Endothelial cell of umbilical vein (primary cell): ENCODE measurements at regions of chr11 and their contacts with region 1.

Region 1: GRCh38 chr11:64566042-64566914 is 24.7 kb upstream of the SLC22A12 start:
- DNase-seq: peak; percentile 65
- H3K4me3 ChIP-seq: no peak overlapping the region
- H3K27ac ChIP-seq: no peak overlapping the region
- H3K4me1 ChIP-seq: no peaks in the 10 kb centered on the region
- H3K27me3 ChIP-seq: no peaks in the 10 kb centered on the region
- CTCF ChIP-seq: no peak
- POLR2A ChIP-seq: no peak

Region 2: GRCh38 chr11:64638018-64638665 is 71.9 kb after region 1 on chr11:
- CTCF ChIA-PET with region 1: no interaction called
- POLR2A ChIA-PET with region 1: no interaction called
- dilution Hi-C with region 1: no loop called
- intact Hi-C with region 1: loop called (anchors 5 kb)
- DNase-seq: no peak
- H3K4me3 ChIP-seq: no peak overlapping the region
- H3K27ac ChIP-seq: no peak overlapping the region
- H3K4me1 ChIP-seq: no peaks in the 10 kb centered on the region
- H3K27me3 ChIP-seq: peaks cover 37 to 48% of the 10 kb centered on the region in 2 experiments
- CTCF ChIP-seq: no peak
- POLR2A ChIP-seq: no peak

Region 3: GRCh38 chr11:64659417-64660144 is 93.3 kb after region 1 on chr11:
- CTCF ChIA-PET with region 1: no interaction called
- POLR2A ChIA-PET with region 1: interaction called, 10 read pairs
- dilution Hi-C with region 1: no loop called
- intact Hi-C with region 1: no loop called
- DNase-seq: no peak
- H3K4me3 ChIP-seq: no peak overlapping the region
- H3K27ac ChIP-seq: no peak overlapping the region
- H3K4me1 ChIP-seq: no peaks in the 10 kb centered on the region
- H3K27me3 ChIP-seq: no peaks in the 10 kb centered on the region
- CTCF ChIP-seq: no peak
- POLR2A ChIP-seq: no peak

Region 4: DNA sequence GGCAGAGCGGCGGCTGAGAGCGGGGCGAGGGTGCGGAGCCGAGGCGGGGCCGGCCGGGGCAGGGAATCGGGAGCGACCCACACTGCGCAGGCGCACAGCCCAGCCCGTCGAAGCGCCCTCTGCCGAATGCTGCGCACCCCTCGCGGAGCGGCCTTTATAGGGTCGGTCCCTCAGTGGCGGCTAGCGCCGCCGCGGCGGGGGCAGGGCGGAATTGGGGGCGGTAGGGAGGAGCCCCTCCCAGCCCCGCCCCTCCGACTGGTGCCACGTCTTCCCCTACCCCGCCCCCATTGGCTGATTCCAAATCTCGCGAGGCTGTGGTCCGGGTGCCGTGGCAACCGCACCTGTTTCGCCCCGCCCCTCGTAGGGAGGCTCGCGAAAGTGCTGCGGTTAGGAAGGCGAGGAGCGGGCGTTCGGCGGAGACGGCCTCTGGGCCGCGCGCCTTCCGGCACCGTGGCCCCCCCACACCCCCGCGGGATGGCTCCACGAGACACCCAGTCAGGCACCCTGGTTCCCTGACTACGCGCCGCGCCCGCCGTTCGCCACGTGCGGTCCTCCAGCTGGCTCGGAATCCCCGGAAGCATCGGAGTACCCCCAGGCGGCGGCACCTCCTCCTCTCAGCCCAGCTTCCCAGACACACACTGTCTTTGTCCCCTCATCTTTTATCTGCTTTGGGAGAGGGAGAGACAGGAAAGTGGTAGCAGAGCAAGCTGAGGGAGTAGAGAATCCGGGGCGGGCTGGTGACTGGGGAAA is 312.4 kb after region 1 on chr11 and contains the start of gene EHD1:
- CTCF ChIA-PET with region 1: no interaction called
- POLR2A ChIA-PET with region 1: no interaction called
- dilution Hi-C with region 1: no loop called
- intact Hi-C with region 1: no loop called
- DNase-seq: peak; percentile 97
- H3K4me3 ChIP-seq: peak within 1 kb of the TSS; percentile 54 to 92 (median 74)
- H3K27ac ChIP-seq: peak within 1 kb of the TSS; percentile 71
- H3K4me1 ChIP-seq: peaks cover 22% of the 10 kb centered on the region
- H3K27me3 ChIP-seq: no peaks in the 10 kb centered on the region
- CTCF ChIP-seq: peak; percentile 42 to 74
- POLR2A ChIP-seq: peak; percentile 99
- total RNA-seq, gene EHD1: 98.0 and 109 TPM in 2 replicates